Caco-2 (cell line): ENCODE measurements at regions of chr10 and their contacts with region 1.

Region 1: GRCh38 chr10:15262036-15262713 is 93.7 kb upstream of the NMT2 start:
- DNase-seq: peak in 1 of 2 experiments; percentile 51
- H3K4me3 ChIP-seq: no peak overlapping the region
- H3K4me3 Mint-ChIP-seq: no peak overlapping the region
- H3K27ac Mint-ChIP-seq: no peak overlapping the region
- H3K4me1 ChIP-seq: no peaks in the 10 kb centered on the region
- H3K4me1 Mint-ChIP-seq: no peaks in the 10 kb centered on the region
- H3K27me3 ChIP-seq: no peaks in the 10 kb centered on the region
- H3K27me3 Mint-ChIP-seq: no peaks in the 10 kb centered on the region
- CTCF ChIP-seq: peak; percentile 58 to 69

Region 2: DNA sequence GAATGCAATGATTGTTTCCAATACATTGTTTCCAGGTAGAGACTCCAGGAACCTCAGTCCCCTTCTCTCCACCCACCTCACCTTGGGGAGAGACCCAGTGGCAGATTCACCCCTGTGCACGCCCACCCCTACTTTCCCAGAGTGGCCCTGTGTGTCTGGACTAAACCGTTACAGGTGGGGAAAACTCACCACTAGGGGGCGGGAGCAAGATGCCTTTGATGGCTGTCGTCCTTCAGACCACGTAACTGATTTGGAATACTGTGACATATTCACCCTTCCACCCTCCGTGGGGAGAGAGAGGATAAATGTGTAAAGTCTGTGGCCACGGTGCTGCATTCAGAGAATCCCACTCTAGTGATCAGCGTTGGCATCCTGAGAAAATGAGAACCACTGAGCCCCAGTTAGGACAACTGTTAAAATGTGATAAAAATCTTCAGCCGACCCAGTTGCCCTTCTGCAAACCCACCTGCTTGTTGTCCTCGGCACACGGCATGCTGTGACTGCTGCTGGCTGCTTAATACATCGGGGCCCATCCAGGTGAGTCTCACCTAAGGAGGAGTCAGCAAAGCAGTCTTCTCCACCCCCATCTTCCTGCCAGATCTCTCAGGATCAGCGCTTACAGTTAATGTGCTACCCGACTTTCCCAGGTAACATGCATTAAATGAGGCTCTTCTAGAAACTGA is 52.2 kb before region 1 on chr10:
- CTCF ChIA-PET with region 1: no interaction called
- POLR2A ChIA-PET with region 1: no interaction called
- intact Hi-C with region 1: no loop called
- DNase-seq: peak; percentile 82 to 88
- H3K4me3 ChIP-seq: no peak overlapping the region
- H3K4me3 Mint-ChIP-seq: no peak overlapping the region
- H3K27ac Mint-ChIP-seq: no peak overlapping the region
- H3K4me1 ChIP-seq: no peaks in the 10 kb centered on the region
- H3K4me1 Mint-ChIP-seq: peaks cover 7% of the 10 kb centered on the region
- H3K27me3 ChIP-seq: no peaks in the 10 kb centered on the region
- H3K27me3 Mint-ChIP-seq: no peaks in the 10 kb centered on the region
- CTCF ChIP-seq: peak; percentile 95 to 97

Region 3: GRCh38 chr10:15293862-15294842 is 32.0 kb after region 1 on chr10:
- CTCF ChIA-PET with region 1: no interaction called
- POLR2A ChIA-PET with region 1: no interaction called
- intact Hi-C with region 1: no loop called
- DNase-seq: no peak
- H3K4me3 ChIP-seq: no peak overlapping the region
- H3K4me3 Mint-ChIP-seq: no peak overlapping the region
- H3K27ac Mint-ChIP-seq: no peak overlapping the region
- H3K4me1 ChIP-seq: no peaks in the 10 kb centered on the region
- H3K4me1 Mint-ChIP-seq: no peaks in the 10 kb centered on the region
- H3K27me3 ChIP-seq: no peaks in the 10 kb centered on the region
- H3K27me3 Mint-ChIP-seq: no peaks in the 10 kb centered on the region
- CTCF ChIP-seq: no peak

Region 4: DNA sequence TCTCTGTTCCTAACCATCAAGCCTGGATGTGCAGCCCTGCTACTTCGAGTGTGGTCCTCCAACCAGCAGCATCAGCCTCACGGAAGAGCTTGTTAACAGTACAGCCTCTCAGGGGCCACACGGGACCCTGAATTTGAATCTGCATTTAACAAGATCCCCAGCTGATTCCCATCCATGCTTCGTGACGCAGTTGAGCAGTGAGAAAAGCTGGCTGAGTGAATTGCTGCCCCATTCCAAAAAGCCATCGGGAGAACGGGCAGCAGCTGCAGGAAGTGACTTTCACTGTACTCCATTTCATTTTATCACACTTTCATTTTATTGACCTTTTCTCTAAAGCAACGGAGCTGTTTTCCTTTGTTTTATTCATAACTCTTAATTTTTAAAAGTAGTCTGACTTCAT is 86.4 kb after region 1 on chr10:
- CTCF ChIA-PET with region 1: no interaction called
- POLR2A ChIA-PET with region 1: no interaction called
- intact Hi-C with region 1: no loop called
- DNase-seq: no peak
- H3K4me3 ChIP-seq: no peak overlapping the region
- H3K4me3 Mint-ChIP-seq: no peak overlapping the region
- H3K27ac Mint-ChIP-seq: no peak overlapping the region
- H3K4me1 ChIP-seq: peaks cover 26% of the 10 kb centered on the region
- H3K4me1 Mint-ChIP-seq: peaks cover 36% of the 10 kb centered on the region
- H3K27me3 ChIP-seq: no peaks in the 10 kb centered on the region
- H3K27me3 Mint-ChIP-seq: no peaks in the 10 kb centered on the region
- CTCF ChIP-seq: no peak

Region 5: DNA sequence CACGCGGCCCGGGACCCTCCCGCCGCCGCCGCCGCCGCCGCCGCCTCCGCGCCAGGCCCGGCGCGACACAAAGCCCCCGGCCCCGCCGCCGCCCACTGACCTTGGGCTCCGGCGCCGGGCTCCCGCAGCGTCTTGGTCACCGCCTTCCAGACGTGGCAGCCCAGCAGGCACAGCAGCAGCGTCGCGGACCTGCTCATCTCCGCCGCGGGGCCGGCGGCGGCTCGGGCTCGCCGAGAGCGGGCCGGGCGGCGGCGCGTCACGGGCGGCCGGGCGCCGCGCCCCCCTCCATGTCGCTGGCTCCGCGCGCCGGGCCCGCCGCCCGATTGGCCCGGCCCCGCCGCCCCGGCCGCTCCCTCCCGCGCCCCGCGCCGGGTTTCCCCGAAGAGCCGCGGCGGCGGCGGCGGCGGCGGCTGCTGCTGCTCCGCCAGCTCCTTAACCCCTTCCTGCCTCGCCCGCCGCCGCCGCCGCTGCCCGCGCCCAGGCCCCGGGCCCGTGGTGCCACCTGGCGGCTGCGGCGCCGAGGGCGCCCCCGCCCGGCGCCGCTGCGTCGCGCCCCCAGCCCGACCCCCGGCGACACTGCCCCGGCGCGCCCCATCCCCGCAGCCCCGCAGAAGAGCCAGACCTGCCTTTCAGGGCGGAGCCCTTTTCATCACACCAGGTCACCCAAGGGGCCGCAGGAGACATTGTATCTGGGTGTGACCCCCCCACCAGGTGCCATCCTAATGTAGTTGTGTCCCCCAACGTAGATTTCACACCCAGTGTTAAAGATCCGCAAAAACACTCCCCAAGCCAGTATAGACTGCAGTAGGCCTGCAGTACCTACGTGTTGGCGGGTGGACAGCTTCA is 108.9 kb after region 1 on chr10 and contains the start of gene FAM171A1:
- CTCF ChIA-PET with region 1: interaction called, 14 read pairs
- POLR2A ChIA-PET with region 1: no interaction called
- intact Hi-C with region 1: loop called (anchors 2 kb)
- DNase-seq: peak; percentile 64 to 83
- H3K4me3 ChIP-seq: peak within 1 kb of the TSS; percentile 66
- H3K4me3 Mint-ChIP-seq: peak within 1 kb of the TSS; percentile 87
- H3K27ac Mint-ChIP-seq: peak within 1 kb of the TSS; percentile 90
- H3K4me1 ChIP-seq: peaks cover 9% of the 10 kb centered on the region
- H3K4me1 Mint-ChIP-seq: peaks cover 11% of the 10 kb centered on the region
- H3K27me3 ChIP-seq: peaks cover 1% of the 10 kb centered on the region
- H3K27me3 Mint-ChIP-seq: peaks cover 5% of the 10 kb centered on the region
- CTCF ChIP-seq: peak; percentile 8 to 30
- total RNA-seq, gene FAM171A1: 26.3 and 27.9 TPM in 2 replicates

Region 6: DNA sequence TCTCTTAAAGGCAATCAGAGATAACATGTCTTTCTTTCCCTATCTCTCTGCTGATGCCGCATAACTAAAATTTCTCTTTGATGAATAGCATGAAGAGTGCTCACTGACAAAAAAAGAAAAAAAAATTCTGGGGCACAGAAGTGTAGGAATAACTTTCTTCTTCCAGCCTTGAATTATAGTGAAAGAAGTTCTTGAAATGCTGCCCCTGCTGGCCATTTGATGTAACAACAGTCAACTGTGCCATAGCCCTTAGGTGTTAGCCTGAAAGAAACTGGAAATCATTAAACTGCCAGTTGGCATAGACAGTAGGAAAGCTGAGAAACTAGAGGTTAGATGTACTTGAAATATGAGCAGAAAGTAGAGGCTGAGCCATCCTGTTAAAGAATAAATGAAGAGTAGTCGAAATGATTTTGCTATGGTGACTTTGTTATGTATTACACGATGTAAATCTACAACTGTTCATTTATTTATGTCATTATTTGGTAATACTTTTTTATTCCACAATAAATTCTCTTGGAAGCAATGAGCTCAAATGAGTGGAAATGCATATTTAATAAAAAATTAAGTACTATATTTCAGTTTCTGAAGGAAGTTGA is 157.2 kb after region 1 on chr10:
- CTCF ChIA-PET with region 1: no interaction called
- POLR2A ChIA-PET with region 1: no interaction called
- intact Hi-C with region 1: loop called (anchors 2 kb)
- DNase-seq: peak in 1 of 2 experiments; percentile 53
- H3K4me3 ChIP-seq: no peak overlapping the region
- H3K4me3 Mint-ChIP-seq: no peak overlapping the region
- H3K27ac Mint-ChIP-seq: no peak overlapping the region
- H3K4me1 ChIP-seq: 0 out of 2 replicates have a peak, but pooled peaks cover 3% of the 10 kb centered on the region
- H3K4me1 Mint-ChIP-seq: no peaks in the 10 kb centered on the region
- H3K27me3 ChIP-seq: no peaks in the 10 kb centered on the region
- H3K27me3 Mint-ChIP-seq: peaks cover 3% of the 10 kb centered on the region
- CTCF ChIP-seq: peak; percentile 88